PC-9 (cell line): ENCODE measurements at regions of chr2 and their contacts with region 1.

Region 1: GRCh38 chr2:178999476-178999875 is 50.5 kb downstream of the CCDC141 start:
- DNase-seq: no peak
- H3K4me3 ChIP-seq: no peak overlapping the region
- H3K27ac ChIP-seq: no peak overlapping the region
- H3K4me1 ChIP-seq: no peaks in the 10 kb centered on the region
- H3K27me3 ChIP-seq: no peaks in the 10 kb centered on the region
- CTCF ChIP-seq: no peak

Region 2: GRCh38 chr2:178943745-178944144 is 55.7 kb before region 1 on chr2:
- CTCF ChIA-PET with region 1: no interaction called
- POLR2A ChIA-PET with region 1: no interaction called
- intact Hi-C with region 1: no loop called
- DNase-seq: no peak
- H3K4me3 ChIP-seq: no peak overlapping the region
- H3K27ac ChIP-seq: no peak overlapping the region
- H3K4me1 ChIP-seq: no peaks in the 10 kb centered on the region
- H3K27me3 ChIP-seq: no peaks in the 10 kb centered on the region
- CTCF ChIP-seq: no peak

Region 3: DNA sequence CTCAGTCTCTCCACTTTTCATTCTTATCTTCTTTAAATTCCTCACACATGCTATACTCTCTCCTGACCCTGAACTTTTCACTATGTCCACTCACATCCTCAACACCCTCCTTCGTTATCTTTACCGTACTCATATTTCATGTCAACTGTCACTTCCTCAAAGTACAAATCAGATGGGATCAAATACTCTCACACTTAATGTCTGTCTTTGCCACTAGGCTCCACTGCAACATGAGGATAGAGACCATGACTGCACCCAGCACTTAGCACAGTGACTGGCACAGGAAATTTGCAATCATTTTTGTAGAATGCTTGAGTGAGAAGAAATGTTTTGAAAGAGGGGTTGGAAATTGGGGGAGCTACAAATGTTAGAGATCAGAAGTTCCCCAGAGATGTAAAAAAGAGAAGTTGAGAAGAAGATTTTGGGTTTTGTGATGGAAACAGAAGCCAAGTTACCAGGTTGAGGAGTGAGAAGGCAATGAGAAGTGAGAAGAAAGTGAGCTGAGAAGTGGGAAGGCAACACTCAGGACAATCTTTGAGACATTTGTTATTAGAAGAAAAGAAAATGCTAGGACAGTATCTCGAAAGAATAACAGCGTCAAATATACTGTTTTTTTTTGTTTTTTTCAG is 36.6 kb before region 1 on chr2:
- CTCF ChIA-PET with region 1: no interaction called
- POLR2A ChIA-PET with region 1: no interaction called
- intact Hi-C with region 1: no loop called
- DNase-seq: peak in 1 of 2 experiments; percentile 30
- H3K4me3 ChIP-seq: no peak overlapping the region
- H3K27ac ChIP-seq: no peak overlapping the region
- H3K4me1 ChIP-seq: no peaks in the 10 kb centered on the region
- H3K27me3 ChIP-seq: no peaks in the 10 kb centered on the region
- CTCF ChIP-seq: no peak

Region 4: GRCh38 chr2:178980815-178981214 is 18.7 kb before region 1 on chr2:
- CTCF ChIA-PET with region 1: no interaction called
- POLR2A ChIA-PET with region 1: no interaction called
- intact Hi-C with region 1: loop called (anchors 1 kb)
- DNase-seq: peak in 1 of 2 experiments; percentile 32
- H3K4me3 ChIP-seq: no peak overlapping the region
- H3K27ac ChIP-seq: no peak overlapping the region
- H3K4me1 ChIP-seq: no peaks in the 10 kb centered on the region
- H3K27me3 ChIP-seq: no peaks in the 10 kb centered on the region
- CTCF ChIP-seq: no peak